ENCODE measurements at regions of chr5 and their contacts with region 1.

Region 1: DNA sequence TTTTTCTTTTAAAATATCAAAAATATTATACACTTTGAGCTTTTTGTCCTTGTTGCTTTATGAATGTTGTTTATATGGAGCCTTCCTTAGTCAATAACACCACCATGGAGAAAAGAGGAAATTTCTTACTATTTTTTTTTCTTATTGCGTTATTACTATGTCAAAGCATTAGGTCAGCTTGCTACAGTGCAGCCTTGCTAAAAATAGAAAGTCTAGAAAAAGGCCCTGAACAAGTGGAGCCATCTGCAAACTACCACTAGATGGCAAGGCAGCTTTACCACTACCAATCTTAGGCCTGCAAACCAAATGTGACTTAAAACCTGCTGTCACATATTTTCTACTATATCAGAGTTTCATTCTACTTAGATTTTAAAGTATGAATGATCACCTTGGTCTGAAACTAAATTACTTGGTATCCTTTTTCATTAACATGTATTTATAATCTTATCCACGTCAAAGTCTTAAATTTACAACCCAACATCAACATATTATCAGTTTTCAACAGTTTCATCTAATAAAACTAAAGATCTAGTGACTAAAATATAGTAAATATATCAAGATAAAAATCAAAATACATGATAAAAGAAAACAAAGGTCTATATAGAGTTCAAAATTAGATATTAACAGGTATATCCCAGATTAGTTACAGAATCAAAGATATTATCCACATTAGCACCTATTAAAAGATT is 113.1 kb upstream of the ACOT12 start:
- DNase-seq: no peak
- H3K4me3 ChIP-seq: no peak overlapping the region
- H3K27ac ChIP-seq: peak overlapping the region; percentile 57
- H3K4me1 ChIP-seq: peaks cover 28% of the 10 kb centered on the region
- H3K27me3 ChIP-seq: no peaks in the 10 kb centered on the region
- CTCF ChIP-seq: peak; percentile 92

Region 2: GRCh38 chr5:81751009-81751835 is 244.2 kb after region 1 on chr5 and contains the start of gene SSBP2:
- intact Hi-C with region 1: loop called (anchors 5 kb)
- DNase-seq: peak; percentile 100
- H3K4me3 ChIP-seq: peak within 1 kb of the TSS; percentile 94
- H3K27ac ChIP-seq: peak within 1 kb of the TSS; percentile 100
- H3K4me1 ChIP-seq: peaks cover 71% of the 10 kb centered on the region
- H3K27me3 ChIP-seq: no peaks in the 10 kb centered on the region
- CTCF ChIP-seq: no peak
- total RNA-seq, gene SSBP2: 40.7 TPM

Region 3: DNA sequence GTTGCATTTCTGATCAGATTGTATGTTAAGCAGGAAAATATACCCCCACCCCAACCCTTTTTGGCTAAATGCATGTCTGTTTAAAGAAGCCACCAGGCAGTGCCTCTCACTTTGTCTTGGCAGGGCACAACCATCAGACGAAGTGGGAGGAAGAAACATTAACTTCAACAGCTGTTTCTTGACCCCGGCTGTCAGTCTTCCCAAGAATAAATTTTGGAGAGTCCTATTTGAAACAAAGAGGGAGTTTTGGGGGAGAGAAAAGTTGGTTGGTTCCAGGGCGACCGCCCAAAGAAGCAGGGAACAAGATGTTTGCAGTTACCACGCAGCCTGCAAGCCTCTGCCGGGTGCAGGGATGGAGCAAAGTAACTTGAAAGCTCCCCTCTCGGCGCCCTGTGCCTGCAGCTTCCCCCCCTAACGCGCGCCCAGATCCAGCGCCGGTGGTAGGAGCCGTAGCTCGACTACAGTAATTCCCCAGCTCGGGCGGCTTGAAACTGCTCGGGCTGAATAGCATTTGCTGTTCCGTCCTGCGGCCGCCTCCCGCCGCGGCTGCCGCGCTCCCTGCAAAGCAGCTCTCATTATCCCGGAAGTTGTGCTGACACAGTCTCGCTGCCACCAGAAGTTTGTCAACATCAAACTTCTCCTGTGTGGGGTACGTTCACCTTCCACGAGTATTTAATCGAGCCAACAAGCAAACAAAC is 344.6 kb after region 1 on chr5:
- intact Hi-C with region 1: loop called (anchors 5 kb)
- DNase-seq: peak; percentile 98
- H3K4me3 ChIP-seq: peak overlapping the region; percentile 68
- H3K27ac ChIP-seq: peak overlapping the region; percentile 99
- H3K4me1 ChIP-seq: peaks cover 82% of the 10 kb centered on the region
- H3K27me3 ChIP-seq: no peaks in the 10 kb centered on the region
- CTCF ChIP-seq: no peak

Region 4: DNA sequence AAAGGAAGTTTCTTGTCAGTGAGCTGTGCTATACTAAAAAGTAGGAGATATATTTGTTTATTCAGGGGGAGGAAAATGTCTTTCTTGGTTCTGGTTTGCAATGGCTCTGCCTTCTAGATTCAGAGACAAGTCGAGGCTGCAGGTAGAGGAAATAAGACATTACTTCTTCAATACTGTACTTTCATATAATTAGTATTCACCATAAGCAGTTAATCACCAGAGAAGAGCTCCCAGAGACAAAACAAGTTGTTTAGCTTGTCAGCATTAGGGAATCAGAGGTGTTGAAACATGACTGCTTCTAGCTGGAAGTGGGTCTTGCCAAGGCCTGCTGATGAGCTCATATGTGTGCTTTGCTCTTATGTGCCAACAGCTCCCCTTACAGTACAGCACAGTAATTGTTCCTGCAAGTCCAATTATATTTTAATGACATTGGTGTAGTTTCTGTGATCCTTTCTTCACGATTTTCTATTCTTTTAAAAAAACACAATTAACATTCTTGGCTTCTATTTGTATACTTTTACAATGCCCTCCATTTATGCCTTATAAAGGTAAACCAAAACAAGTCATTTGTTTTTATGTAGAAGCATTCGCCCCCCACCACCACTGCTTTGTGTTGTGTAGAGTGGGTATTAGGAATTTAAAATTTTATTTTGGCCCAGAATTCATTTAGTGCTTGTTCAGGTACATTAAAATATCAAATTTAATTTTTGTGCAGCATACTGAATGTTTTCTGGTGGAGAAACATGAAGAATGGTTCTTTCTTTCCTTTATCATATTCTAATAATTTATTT is 658.9 kb after region 1 on chr5:
- intact Hi-C with region 1: loop called (anchors 5 kb)
- DNase-seq: peak; percentile 59
- H3K4me3 ChIP-seq: no peak overlapping the region
- H3K27ac ChIP-seq: peak overlapping the region; percentile 61
- H3K4me1 ChIP-seq: peaks cover 19% of the 10 kb centered on the region
- H3K27me3 ChIP-seq: no peaks in the 10 kb centered on the region
- CTCF ChIP-seq: peak; percentile 81